Gastrocnemius medialis (tissue), 4 donors: ENCODE measurements at regions of chr11 and their contacts with region 1.

Region 1: GRCh38 chr11:74255741-74256369 is 55.6 kb downstream of the P4HA3 start:
- DNase-seq: peak in 1 of 2 donors; percentile 36
- ATAC-seq: peak; percentile 72 to 74
- H3K4me3 ChIP-seq: no peak overlapping the region
- H3K27ac ChIP-seq: no peak overlapping the region
- H3K4me1 ChIP-seq: peaks cover 17 to 29% of the 10 kb centered on the region in 2 donors
- H3K27me3 ChIP-seq: no peaks in the 10 kb centered on the region
- CTCF ChIP-seq: peak; percentile 71 to 90 (median 86)
- POLR2A ChIP-seq: no peak

Region 2: GRCh38 chr11:74388678-74389327 is 132.9 kb after region 1 on chr11:
- in situ Hi-C with region 1: loop called in 1 of 4 experiments (anchors 5 kb)
- intact Hi-C with region 1: no loop called
- DNase-seq: peak; percentile 32 to 41
- ATAC-seq: peak; percentile 76 to 91
- H3K4me3 ChIP-seq: no peak overlapping the region
- H3K27ac ChIP-seq: no peak overlapping the region
- H3K4me1 ChIP-seq: no peaks in the 10 kb centered on the region
- H3K27me3 ChIP-seq: no peaks in the 10 kb centered on the region
- CTCF ChIP-seq: peak; percentile 60 to 79 (median 70)
- POLR2A ChIP-seq: no peak

Region 3: DNA sequence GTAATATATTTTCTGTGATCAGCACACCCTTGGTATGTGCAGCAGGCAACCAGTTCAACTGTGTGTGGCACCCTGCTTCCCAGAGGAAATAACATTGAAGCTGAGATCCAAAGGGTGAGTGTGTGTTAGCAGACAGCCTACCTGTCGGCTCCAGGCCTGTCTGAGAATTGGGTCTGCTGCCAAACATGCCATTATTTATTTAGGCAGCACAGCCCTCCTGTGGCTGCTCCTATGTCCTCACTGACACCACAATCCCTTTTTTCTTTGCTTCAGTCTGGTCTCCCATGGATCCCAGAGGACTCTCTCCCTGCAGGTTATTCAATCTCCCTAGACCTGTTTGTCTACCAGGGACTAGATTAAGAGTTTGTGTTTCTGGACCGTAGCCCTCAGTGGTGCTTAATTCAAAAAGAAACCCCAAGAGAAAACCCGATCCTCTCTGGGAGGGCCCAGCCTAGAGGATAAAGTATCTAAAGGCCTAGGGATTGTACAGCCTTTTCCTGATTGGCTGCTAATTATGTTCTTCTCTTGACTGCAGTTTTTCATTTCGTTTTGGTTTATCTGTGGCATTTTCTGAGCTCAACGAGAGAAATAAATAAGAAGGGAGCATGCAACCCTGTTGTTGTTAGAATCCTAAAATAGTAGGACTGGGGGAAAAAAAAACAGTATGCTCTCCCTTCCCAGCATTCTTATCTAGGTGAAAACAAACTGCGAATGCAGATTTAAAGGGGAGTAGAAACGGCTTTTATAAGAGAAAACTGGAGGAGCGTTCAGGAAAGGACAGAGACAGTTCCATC is 187.4 kb after region 1 on chr11:
- in situ Hi-C with region 1: loop called in 2 of 4 experiments (anchors 5 to 10 kb)
- intact Hi-C with region 1: loop called (anchors 1 kb)
- DNase-seq: peak in 1 of 2 donors; percentile 51
- ATAC-seq: peak; percentile 23 to 58
- H3K4me3 ChIP-seq: peak overlapping the region in 1 of 4 donors; percentile 23
- H3K27ac ChIP-seq: peak overlapping the region; percentile 76 to 85 (median 82)
- H3K4me1 ChIP-seq: peaks cover 27 to 31% of the 10 kb centered on the region in 2 donors
- H3K27me3 ChIP-seq: no peaks in the 10 kb centered on the region
- CTCF ChIP-seq: peak in 3 of 5 experiments; percentile 10 to 30 (median 25)
- POLR2A ChIP-seq: no peak

Region 4: DNA sequence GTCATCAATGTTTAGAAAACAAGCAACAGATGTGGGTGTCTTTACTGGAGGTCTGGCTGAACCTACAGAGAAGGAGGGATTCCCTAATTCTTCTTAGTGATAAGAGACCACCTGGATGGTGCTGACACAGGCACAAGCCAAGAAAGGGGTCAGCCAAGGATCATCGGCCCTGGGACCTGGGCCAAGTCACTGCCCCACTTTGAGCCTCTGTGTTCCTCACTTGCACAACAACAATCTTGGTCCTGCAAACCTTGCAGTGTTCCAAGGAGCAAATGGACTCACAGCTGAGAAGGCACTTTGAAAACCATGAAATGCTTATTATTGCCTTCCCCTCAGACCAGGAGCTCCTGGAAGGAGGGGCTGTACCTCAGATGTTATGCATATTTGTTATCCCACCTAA is 218.5 kb after region 1 on chr11:
- in situ Hi-C with region 1: no loop called
- intact Hi-C with region 1: no loop called
- DNase-seq: no peak
- ATAC-seq: no peak
- H3K4me3 ChIP-seq: no peak overlapping the region
- H3K27ac ChIP-seq: no peak overlapping the region
- H3K4me1 ChIP-seq: no peaks in the 10 kb centered on the region
- H3K27me3 ChIP-seq: no peaks in the 10 kb centered on the region
- CTCF ChIP-seq: no peak
- POLR2A ChIP-seq: no peak